GM12878 (cell line): ENCODE measurements at regions of chr11 and their contacts with region 1.

Region 1: GRCh38 chr11:31958076-31958735 is 132.7 kb upstream of the RCN1 start:
- DNase-seq: peak; percentile 9
- ATAC-seq: peak; percentile 98
- H3K4me3 ChIP-seq: no peak overlapping the region
- H3K27ac ChIP-seq: no peak overlapping the region
- H3K4me1 ChIP-seq: no peaks in the 10 kb centered on the region
- H3K27me3 ChIP-seq: no peaks in the 10 kb centered on the region
- CTCF ChIP-seq: peak; percentile 88 to 91 (median 91)
- EP300 ChIP-seq: no peak
- POLR2A ChIP-seq: no peak
- RAD21 ChIP-seq: peak; percentile 91

Region 2: DNA sequence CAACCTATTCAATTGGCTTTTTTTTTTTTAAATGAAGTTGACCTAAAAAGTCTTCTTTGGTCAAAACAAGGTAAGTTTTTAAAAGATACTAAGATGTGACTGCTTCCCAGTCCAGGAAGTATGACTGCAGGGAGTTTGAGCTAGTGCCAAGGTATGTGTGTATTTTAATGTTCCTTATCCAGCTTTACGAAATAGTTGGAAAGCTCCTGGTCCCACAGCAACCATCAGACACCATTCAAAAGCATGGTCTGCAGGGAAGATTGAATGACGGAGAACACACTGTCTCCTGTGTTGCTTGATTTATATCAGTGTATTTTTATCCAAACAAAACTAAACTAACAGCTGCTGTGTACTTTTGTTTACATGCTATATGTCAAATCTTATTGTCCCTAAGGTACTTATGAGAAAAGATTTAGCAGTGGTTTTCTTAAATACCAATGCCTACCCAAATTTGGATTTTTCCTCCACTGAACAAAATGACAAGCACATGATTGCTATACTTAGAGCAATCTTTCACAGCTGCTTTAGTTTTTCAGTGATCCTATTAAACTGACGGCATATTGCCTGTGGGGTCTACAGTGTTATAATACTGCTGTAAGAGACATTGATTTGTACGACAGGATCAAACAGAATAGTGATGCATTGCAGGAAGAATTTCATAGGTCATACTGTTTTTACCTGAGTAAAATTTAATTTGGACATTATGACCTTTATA is 711.6 kb before region 1 on chr11:
- CTCF ChIA-PET with region 1: interaction called, 22 read pairs
- POLR2A ChIA-PET with region 1: no interaction called
- RAD21 ChIA-PET with region 1: interaction called, 6 read pairs
- SMC1A ChIA-PET with region 1: interaction called, 9 read pairs
- in situ Hi-C with region 1: no loop called
- intact Hi-C with region 1: loop called (anchors 2 kb)
- DNase-seq: no peak
- ATAC-seq: no peak
- H3K4me3 ChIP-seq: no peak overlapping the region
- H3K27ac ChIP-seq: no peak overlapping the region
- H3K4me1 ChIP-seq: no peaks in the 10 kb centered on the region
- H3K27me3 ChIP-seq: no peaks in the 10 kb centered on the region; a peak in 1 of 4 replicates
- CTCF ChIP-seq: no peak
- EP300 ChIP-seq: no peak
- POLR2A ChIP-seq: no peak
- RAD21 ChIP-seq: no peak

Region 3: DNA sequence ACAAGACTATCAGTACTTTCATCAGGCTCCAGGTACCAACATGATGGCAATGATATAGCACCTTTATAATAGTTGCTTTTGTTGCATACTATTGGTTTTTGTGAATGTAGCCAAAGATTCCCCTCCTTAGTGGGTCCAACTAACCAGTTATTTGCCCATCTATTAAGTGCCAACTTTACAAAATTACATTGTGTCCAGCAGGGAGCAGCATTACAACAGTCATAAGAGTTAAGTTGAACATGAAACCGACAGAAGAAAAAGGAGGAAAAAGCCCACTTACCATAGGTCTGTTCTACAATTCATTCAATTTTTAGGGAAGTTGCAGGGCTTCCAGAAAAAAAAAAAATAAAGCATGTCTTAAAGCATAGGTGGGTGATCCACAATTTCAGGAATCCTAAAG is 470.4 kb before region 1 on chr11:
- CTCF ChIA-PET with region 1: interaction called, 22 read pairs
- POLR2A ChIA-PET with region 1: no interaction called
- RAD21 ChIA-PET with region 1: interaction called, 4 read pairs
- SMC1A ChIA-PET with region 1: interaction called, 6 read pairs
- in situ Hi-C with region 1: loop called (anchors 10 kb)
- intact Hi-C with region 1: loop called (anchors 1 kb)
- DNase-seq: no peak
- ATAC-seq: peak; percentile 74
- H3K4me3 ChIP-seq: no peak overlapping the region
- H3K27ac ChIP-seq: no peak overlapping the region
- H3K4me1 ChIP-seq: no peaks in the 10 kb centered on the region
- H3K27me3 ChIP-seq: no peaks in the 10 kb centered on the region
- CTCF ChIP-seq: peak; percentile 2 to 47 (median 21); a peak in 2 of 6 replicates
- EP300 ChIP-seq: no peak
- POLR2A ChIP-seq: no peak
- RAD21 ChIP-seq: peak; percentile 57

Region 4: DNA sequence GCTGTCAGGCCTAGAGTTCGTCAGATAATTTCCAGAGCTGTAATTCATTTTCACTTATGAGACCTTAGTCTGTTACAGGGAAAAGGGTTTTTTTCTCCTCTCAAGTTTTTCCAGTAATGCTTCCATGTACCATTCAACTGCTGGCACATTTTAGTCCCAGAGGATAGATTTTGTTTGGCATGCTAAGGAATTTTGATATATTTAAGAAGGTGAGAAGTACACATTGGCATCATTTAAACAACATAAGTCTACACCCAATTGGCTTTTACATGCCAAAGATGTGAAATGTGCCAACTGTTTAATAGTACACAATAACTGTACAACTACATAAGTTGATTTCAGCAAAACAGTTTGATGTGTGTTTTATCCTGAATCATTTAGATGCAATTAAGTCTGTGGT is 218.1 kb before region 1 on chr11:
- CTCF ChIA-PET with region 1: no interaction called
- POLR2A ChIA-PET with region 1: no interaction called
- RAD21 ChIA-PET with region 1: no interaction called
- SMC1A ChIA-PET with region 1: no interaction called
- in situ Hi-C with region 1: no loop called
- intact Hi-C with region 1: no loop called
- DNase-seq: no peak
- ATAC-seq: no peak
- H3K4me3 ChIP-seq: no peak overlapping the region
- H3K27ac ChIP-seq: no peak overlapping the region
- H3K4me1 ChIP-seq: no peaks in the 10 kb centered on the region
- H3K27me3 ChIP-seq: no peaks in the 10 kb centered on the region
- CTCF ChIP-seq: no peak
- EP300 ChIP-seq: no peak
- POLR2A ChIP-seq: no peak
- RAD21 ChIP-seq: no peak

Region 5: DNA sequence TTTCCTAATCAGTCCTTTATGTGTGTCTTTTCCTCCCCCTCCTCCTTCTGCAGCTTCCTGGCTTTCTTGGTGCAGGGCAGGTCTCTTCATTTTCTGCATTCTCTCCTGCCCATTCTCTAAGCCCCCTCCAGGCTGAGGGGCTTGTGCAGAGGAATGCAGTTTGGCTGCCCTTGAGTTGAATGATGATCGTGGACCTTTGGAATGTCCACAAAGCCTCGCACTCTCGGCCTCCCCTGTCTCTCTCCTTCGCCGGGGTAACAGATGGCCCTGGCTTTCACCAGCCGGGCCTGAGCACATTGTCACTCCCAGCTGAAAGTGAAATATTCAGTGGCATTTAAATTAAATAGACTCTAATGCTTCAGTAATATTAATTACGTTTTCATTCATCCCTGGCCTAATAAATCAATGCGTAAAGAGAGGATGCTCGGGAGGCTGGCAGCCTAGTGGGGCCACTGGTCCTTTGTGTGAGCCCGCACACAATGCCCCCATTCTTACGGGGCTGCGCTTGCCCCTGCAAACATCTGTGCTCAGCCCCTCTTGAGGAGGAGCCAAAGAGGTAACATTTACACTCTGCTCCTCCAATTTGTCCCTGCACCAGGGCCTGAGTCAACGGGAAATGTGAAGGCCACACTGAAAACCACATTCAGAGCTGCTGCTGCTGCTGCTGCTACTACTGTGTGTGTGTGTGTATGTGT is 82.2 kb before region 1 on chr11:
- CTCF ChIA-PET with region 1: interaction called, 36 read pairs
- POLR2A ChIA-PET with region 1: no interaction called
- RAD21 ChIA-PET with region 1: interaction called, 11 read pairs
- SMC1A ChIA-PET with region 1: interaction called, 26 read pairs
- in situ Hi-C with region 1: no loop called
- intact Hi-C with region 1: loop called (anchors 5 kb)
- DNase-seq: no peak
- ATAC-seq: no peak
- H3K4me3 ChIP-seq: no peak overlapping the region
- H3K27ac ChIP-seq: no peak overlapping the region
- H3K4me1 ChIP-seq: no peaks in the 10 kb centered on the region
- H3K27me3 ChIP-seq: peaks cover 0 to 4% of the 10 kb centered on the region in 2 experiments; a peak in 3 of 4 replicates
- CTCF ChIP-seq: no peak
- EP300 ChIP-seq: no peak
- POLR2A ChIP-seq: no peak
- RAD21 ChIP-seq: no peak

Region 6: DNA sequence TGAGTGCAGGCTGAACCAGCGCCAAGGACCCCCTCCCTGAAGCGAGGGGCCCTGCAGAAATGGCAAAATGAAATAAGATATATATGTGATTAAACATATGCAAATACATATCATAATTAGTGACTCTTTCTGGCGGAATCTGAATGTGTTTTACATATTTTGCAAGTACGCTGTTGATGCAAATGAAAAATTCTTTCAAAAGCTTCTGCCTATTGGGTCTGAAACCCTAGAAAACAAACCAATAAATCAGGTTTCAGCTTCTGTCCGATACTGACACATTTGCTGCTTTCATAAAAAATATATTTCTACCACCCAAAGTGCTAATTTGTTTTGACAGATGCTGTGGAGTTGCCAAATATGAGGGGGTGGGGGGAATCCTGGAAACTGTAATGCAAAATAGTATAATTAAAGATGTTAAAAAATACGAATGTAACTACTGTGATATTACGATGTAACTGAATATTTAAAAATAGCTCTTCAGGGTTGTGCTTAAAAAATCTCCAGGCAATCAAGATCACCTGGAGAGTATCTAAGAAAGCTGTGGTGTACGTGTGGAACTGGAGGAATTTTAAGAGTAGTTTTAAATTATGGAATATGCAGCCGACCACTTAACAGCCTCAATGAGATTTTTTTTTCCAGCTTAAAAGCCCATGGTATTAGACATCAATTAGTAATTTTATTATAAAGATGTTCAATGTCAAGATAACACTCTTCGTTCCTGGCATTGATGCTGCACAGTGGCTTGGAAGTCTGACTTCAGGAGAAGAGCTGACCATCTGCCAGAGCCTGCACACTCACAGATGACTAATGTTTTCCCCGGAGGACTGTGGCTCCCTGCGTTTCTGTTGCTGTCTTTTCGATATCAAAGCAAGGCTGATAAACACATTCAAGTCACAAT is 10.5 kb after region 1 on chr11:
- CTCF ChIA-PET with region 1: interaction called, 19 read pairs
- POLR2A ChIA-PET with region 1: no interaction called
- RAD21 ChIA-PET with region 1: interaction called, 10 read pairs
- SMC1A ChIA-PET with region 1: interaction called, 17 read pairs
- in situ Hi-C with region 1: no loop called
- intact Hi-C with region 1: no loop called
- DNase-seq: no peak
- ATAC-seq: no peak
- H3K4me3 ChIP-seq: no peak overlapping the region
- H3K27ac ChIP-seq: no peak overlapping the region
- H3K4me1 ChIP-seq: no peaks in the 10 kb centered on the region
- H3K27me3 ChIP-seq: peaks cover 0 to 2% of the 10 kb centered on the region in 2 experiments; a peak in 2 of 4 replicates
- CTCF ChIP-seq: no peak
- EP300 ChIP-seq: no peak
- POLR2A ChIP-seq: no peak
- RAD21 ChIP-seq: no peak

Region 7: GRCh38 chr11:32006799-32007388 is 48.7 kb after region 1 on chr11:
- CTCF ChIA-PET with region 1: interaction called, 67 read pairs
- POLR2A ChIA-PET with region 1: no interaction called
- RAD21 ChIA-PET with region 1: interaction called, 15 read pairs
- SMC1A ChIA-PET with region 1: interaction called, 13 read pairs
- in situ Hi-C with region 1: no loop called
- intact Hi-C with region 1: no loop called
- DNase-seq: peak; percentile 11
- ATAC-seq: peak; percentile 87
- H3K4me3 ChIP-seq: no peak overlapping the region
- H3K27ac ChIP-seq: no peak overlapping the region
- H3K4me1 ChIP-seq: no peaks in the 10 kb centered on the region
- H3K27me3 ChIP-seq: no peaks in the 10 kb centered on the region
- CTCF ChIP-seq: peak; percentile 68 to 75 (median 72); a peak in 5 of 6 replicates
- EP300 ChIP-seq: no peak
- POLR2A ChIP-seq: no peak
- RAD21 ChIP-seq: peak; percentile 68

Region 8: DNA sequence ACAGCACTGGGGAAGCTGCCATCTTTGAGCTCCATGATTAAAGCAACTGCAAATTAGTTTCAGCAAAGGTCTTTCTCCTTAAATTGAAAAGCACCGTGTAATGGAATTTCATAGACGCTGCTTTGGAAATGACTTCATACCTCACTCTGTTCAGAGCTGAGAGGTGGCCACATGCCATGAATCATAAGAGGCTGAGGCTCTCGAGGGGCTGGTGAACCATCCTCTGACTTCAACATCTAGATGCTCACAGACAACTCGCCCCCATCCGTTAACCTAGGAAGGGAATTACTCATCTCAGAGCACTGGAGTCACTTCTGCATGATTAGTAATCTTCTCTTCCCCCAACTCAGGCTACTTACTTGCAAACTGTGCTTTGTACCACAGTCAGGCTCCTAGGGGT is 255.0 kb after region 1 on chr11:
- CTCF ChIA-PET with region 1: no interaction called
- POLR2A ChIA-PET with region 1: no interaction called
- RAD21 ChIA-PET with region 1: no interaction called
- SMC1A ChIA-PET with region 1: no interaction called
- in situ Hi-C with region 1: no loop called
- intact Hi-C with region 1: no loop called
- DNase-seq: no peak
- ATAC-seq: peak; percentile 31; the same call in 2 of the 3 replicates
- H3K4me3 ChIP-seq: no peak overlapping the region
- H3K27ac ChIP-seq: no peak overlapping the region
- H3K4me1 ChIP-seq: no peaks in the 10 kb centered on the region
- H3K27me3 ChIP-seq: peaks cover 0 to 2% of the 10 kb centered on the region in 2 experiments; a peak in 2 of 4 replicates
- CTCF ChIP-seq: no peak
- EP300 ChIP-seq: no peak
- POLR2A ChIP-seq: no peak
- RAD21 ChIP-seq: no peak